H1 (cell line): ENCODE measurements at regions of chr2 and their contacts with region 1.

Region 1: GRCh38 chr2:127591221-127591923 is 54.6 kb upstream of the GPR17 start:
- DNase-seq: peak; percentile 68 to 88
- H3K4me3 ChIP-seq: no peak overlapping the region
- H3K27ac ChIP-seq: no peak overlapping the region
- H3K4me1 ChIP-seq: peaks cover 0 to 1% (median 0%) of the 10 kb centered on the region in 4 experiments; a peak in 1 of 7 replicates
- H3K27me3 ChIP-seq: no peaks in the 10 kb centered on the region
- CTCF ChIP-seq: peak; percentile 98 to 100 (median 100)
- EP300 ChIP-seq: no peak
- POLR2A ChIP-seq: no peak
- RAD21 ChIP-seq: peak; percentile 98 to 99

Region 2: GRCh38 chr2:127226520-127227263 is 364.7 kb before region 1 on chr2:
- CTCF ChIA-PET with region 1: no interaction called
- POLR2A ChIA-PET with region 1: no interaction called
- DNase-seq: no peak
- H3K4me3 ChIP-seq: no peak overlapping the region
- H3K27ac ChIP-seq: no peak overlapping the region
- H3K4me1 ChIP-seq: no peaks in the 10 kb centered on the region
- H3K27me3 ChIP-seq: no peaks in the 10 kb centered on the region
- CTCF ChIP-seq: no peak
- EP300 ChIP-seq: no peak
- POLR2A ChIP-seq: no peak
- RAD21 ChIP-seq: no peak

Region 3: DNA sequence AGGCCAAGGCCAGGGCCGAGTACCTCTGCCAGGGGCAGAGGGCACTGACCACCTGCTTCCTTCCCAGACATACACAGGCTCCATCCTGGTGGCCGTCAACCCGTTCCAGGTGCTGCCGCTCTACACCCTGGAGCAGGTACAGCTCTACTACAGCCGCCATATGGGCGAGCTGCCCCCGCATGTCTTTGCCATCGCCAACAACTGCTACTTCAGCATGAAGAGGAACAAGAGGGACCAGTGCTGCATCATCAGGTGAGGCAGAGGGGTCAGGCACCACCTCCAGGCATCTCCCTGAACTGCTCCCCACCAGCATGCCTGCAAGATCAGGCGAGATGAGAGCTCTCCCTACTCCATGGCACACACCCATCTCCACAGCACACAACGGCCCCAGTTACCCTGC is 24.8 kb before region 1 on chr2:
- CTCF ChIA-PET with region 1: interaction called, 27 read pairs
- POLR2A ChIA-PET with region 1: interaction called, 3 read pairs
- DNase-seq: no peak
- H3K4me3 ChIP-seq: no peak overlapping the region
- H3K27ac ChIP-seq: no peak overlapping the region
- H3K4me1 ChIP-seq: peaks cover 0 to 3% (median 2%) of the 10 kb centered on the region in 4 experiments; a peak in 2 of 7 replicates
- H3K27me3 ChIP-seq: no peaks in the 10 kb centered on the region
- CTCF ChIP-seq: peak in 2 of 3 experiments; percentile 36 to 37; a peak in 2 of 4 replicates
- EP300 ChIP-seq: no peak
- POLR2A ChIP-seq: no peak
- RAD21 ChIP-seq: peak in 1 of 2 experiments; percentile 16; a peak in 1 of 4 replicates

Region 4: GRCh38 chr2:127609031-127609751 is 17.8 kb after region 1 on chr2:
- CTCF ChIA-PET with region 1: interaction called, 54 read pairs
- POLR2A ChIA-PET with region 1: no interaction called
- DNase-seq: no peak
- H3K4me3 ChIP-seq: no peak overlapping the region
- H3K27ac ChIP-seq: no peak overlapping the region
- H3K4me1 ChIP-seq: no peaks in the 10 kb centered on the region; a peak in 1 of 7 replicates
- H3K27me3 ChIP-seq: no peaks in the 10 kb centered on the region
- CTCF ChIP-seq: no peak
- EP300 ChIP-seq: no peak
- POLR2A ChIP-seq: no peak
- RAD21 ChIP-seq: no peak

Region 5: GRCh38 chr2:127640082-127641072 is 49.0 kb after region 1 on chr2:
- CTCF ChIA-PET with region 1: interaction called, 160 read pairs
- POLR2A ChIA-PET with region 1: no interaction called
- DNase-seq: peak in 1 of 2 experiments; percentile 75
- H3K4me3 ChIP-seq: no peak overlapping the region
- H3K27ac ChIP-seq: no peak overlapping the region
- H3K4me1 ChIP-seq: peaks cover 0 to 19% (median 7%) of the 10 kb centered on the region in 4 experiments; a peak in 6 of 7 replicates
- H3K27me3 ChIP-seq: no peaks in the 10 kb centered on the region
- CTCF ChIP-seq: peak in 2 of 3 experiments; percentile 61 to 79; a peak in 3 of 4 replicates
- EP300 ChIP-seq: no peak
- POLR2A ChIP-seq: no peak
- RAD21 ChIP-seq: peak; percentile 66 to 73

Region 6: DNA sequence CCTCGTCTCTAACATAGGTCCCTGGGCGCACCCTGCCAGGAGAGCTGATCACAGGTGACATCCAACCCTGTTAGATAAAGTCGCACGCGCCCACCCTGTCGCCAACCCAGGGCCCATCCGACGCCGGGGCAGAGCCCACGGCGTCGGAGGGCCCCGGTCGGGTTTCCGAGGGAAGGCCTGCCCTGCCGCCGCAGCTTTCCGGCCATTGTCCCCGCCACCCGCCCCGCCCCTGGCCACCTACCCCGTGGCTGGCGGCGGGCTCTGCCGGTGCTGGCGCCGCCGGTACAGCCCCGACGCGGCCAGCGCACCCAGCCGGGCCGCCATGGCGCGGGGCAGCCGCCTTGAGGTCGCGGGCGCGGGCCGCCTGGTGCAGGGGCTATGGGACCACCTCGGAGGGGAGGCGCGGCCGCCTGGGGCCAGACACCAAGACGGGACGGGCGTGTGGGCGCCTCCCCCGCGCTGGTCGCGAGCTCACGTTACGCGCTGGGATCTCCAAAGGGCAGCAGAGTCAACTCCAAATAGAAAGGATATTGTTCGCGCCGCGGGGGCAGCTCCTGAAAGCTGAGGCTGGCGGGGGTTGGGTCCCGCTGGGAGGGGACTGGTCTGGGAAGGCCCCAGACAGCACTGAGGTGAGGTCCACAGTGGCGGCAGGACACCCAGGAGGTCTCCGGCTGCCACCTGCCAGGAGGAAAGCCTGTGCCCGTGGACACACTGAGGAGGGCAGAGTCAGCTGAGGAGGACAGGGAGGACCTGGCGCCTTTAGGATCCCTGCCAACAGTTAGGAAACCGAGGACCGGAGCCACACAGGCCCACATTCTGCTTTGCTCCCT is 72.9 kb after region 1 on chr2:
- CTCF ChIA-PET with region 1: interaction called, 11 read pairs
- POLR2A ChIA-PET with region 1: no interaction called
- DNase-seq: no peak
- H3K4me3 ChIP-seq: peak overlapping the region; percentile 25 to 63 (median 45)
- H3K27ac ChIP-seq: no peak overlapping the region
- H3K4me1 ChIP-seq: peaks cover 0 to 3% (median 0%) of the 10 kb centered on the region in 4 experiments; a peak in 3 of 7 replicates
- H3K27me3 ChIP-seq: peaks cover 9 to 33% (median 25%) of the 10 kb centered on the region in 4 experiments
- CTCF ChIP-seq: no peak
- EP300 ChIP-seq: no peak
- POLR2A ChIP-seq: no peak
- RAD21 ChIP-seq: no peak

Region 7: GRCh38 chr2:127695491-127696472 is 104.4 kb after region 1 on chr2:
- CTCF ChIA-PET with region 1: interaction called, 20 read pairs
- POLR2A ChIA-PET with region 1: no interaction called
- DNase-seq: peak in 1 of 2 experiments; percentile 82
- H3K4me3 ChIP-seq: peak overlapping the region in 2 of 4 experiments; percentile 15 to 58; a peak in 4 of 8 replicates
- H3K27ac ChIP-seq: no peak overlapping the region
- H3K4me1 ChIP-seq: peaks cover 0 to 4% (median 2%) of the 10 kb centered on the region in 4 experiments; a peak in 5 of 7 replicates
- H3K27me3 ChIP-seq: peaks cover 0 to 8% (median 5%) of the 10 kb centered on the region in 4 experiments; a peak in 3 of 7 replicates
- CTCF ChIP-seq: peak; percentile 65 to 87 (median 86)
- EP300 ChIP-seq: no peak
- POLR2A ChIP-seq: no peak
- RAD21 ChIP-seq: peak; percentile 72 to 80